Caco-2 (cell line): ENCODE measurements at regions of chr12 and their contacts with region 1.

Region 1: DNA sequence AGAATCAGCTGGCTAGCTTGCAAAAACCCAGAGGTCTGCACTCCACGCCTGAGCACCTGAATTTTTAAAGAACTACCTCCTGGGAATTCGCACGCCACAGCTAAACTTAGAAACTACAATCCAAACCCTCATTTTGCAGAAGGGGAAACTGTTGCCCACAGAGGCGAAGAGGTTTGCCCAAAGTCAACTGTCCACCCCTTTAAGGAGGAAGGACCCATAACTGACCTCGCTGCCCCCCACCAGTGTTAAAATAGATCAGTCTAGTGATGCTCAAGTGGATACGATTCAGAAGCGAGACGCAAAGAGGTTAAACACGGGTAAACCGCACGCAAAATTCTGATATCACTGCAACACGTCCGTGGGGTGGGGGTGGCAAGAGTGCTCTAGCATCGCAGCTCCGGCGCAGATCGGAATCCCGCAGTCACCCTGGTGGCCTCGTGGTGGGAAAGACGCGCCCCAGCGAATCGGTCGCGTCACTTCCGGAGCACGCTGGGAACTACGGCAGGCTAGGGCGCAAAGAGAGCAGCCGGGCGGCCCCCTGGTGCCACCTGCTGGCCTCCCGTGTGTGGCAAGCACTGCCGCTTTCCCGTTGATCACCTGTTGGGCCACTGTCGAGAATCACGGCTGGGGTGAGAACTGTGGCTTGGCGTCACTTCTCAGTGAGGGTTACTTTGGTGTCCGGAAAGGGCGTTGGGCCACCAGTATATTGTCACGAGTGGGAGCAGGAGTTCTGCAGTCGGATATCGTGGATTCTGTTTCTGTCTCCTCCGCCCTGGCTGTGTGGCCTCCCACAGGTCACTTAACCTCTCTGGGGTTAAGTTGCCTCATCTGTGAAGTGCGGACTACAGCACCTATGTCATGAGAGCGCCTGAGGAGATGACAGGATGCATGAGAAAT is at the start of gene ALKBH2:
- DNase-seq: peak; percentile 93 to 94
- H3K4me3 ChIP-seq: peak within 1 kb of the TSS; percentile 49
- H3K4me3 Mint-ChIP-seq: peak within 1 kb of the TSS; percentile 77
- H3K27ac Mint-ChIP-seq: peak within 1 kb of the TSS; percentile 81
- H3K4me1 ChIP-seq: no peaks in the 10 kb centered on the region; the same call in 1 of the 2 replicates
- H3K4me1 Mint-ChIP-seq: peaks cover 8% of the 10 kb centered on the region
- H3K27me3 ChIP-seq: no peaks in the 10 kb centered on the region
- H3K27me3 Mint-ChIP-seq: no peaks in the 10 kb centered on the region
- CTCF ChIP-seq: peak; percentile 94 to 95
- total RNA-seq, gene ALKBH2: 38.3 and 41.4 TPM in 2 replicates

Region 2: DNA sequence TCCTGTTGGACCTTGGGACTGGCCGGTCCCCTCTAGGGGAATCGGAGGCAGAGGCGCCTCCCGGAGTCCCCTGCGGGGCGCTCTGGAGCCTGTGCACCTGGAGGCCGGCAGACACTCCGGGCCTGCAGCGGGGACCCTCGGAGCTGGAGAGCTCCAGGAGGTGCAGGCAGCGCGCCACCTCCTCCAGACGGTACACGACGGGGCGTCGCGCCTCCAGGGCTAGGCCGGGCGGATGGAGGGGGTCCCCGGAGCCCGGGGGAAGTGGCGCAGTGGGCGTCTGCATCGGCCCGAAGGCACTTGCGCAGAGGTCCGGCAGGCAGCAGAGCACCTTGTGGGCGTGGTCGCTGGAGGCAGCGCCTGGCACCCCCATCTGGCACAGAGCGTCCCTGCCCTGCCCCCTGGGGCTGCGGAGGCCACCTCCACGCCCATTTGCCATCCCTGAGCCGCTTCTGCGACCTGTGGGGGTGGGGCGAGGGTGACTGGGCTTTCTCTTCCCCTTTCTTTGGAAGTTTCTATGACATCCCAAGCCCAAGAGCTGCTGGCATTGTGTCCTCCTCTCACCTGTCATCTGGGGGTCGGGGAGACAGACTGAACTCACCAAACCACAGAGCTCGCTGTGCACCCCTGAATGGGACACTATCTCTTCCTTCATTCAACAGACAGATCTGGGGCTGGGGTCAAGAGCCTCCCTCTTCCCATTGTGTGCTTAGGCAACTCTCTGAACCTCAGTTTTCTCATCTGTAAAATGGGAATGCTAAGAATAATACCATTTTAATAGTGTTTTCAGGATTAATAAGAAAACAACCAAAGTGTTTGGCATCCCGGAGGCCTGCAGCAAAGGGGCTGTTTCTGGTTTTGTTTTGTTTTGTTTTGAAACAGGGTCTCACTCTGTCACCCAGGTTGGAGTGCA is 324.4 kb before region 1 on chr12:
- CTCF ChIA-PET with region 1: interaction called, 4 read pairs
- POLR2A ChIA-PET with region 1: no interaction called
- intact Hi-C with region 1: loop called (anchors 2 kb)
- DNase-seq: peak in 1 of 2 experiments; percentile 37
- H3K4me3 ChIP-seq: no peak overlapping the region; the same call in 1 of the 2 replicates
- H3K4me3 Mint-ChIP-seq: peak overlapping the region; percentile 23
- H3K27ac Mint-ChIP-seq: no peak overlapping the region
- H3K4me1 ChIP-seq: peaks cover 18% of the 10 kb centered on the region
- H3K4me1 Mint-ChIP-seq: peaks cover 7% of the 10 kb centered on the region
- H3K27me3 ChIP-seq: no peaks in the 10 kb centered on the region
- H3K27me3 Mint-ChIP-seq: no peaks in the 10 kb centered on the region
- CTCF ChIP-seq: no peak

Region 3: DNA sequence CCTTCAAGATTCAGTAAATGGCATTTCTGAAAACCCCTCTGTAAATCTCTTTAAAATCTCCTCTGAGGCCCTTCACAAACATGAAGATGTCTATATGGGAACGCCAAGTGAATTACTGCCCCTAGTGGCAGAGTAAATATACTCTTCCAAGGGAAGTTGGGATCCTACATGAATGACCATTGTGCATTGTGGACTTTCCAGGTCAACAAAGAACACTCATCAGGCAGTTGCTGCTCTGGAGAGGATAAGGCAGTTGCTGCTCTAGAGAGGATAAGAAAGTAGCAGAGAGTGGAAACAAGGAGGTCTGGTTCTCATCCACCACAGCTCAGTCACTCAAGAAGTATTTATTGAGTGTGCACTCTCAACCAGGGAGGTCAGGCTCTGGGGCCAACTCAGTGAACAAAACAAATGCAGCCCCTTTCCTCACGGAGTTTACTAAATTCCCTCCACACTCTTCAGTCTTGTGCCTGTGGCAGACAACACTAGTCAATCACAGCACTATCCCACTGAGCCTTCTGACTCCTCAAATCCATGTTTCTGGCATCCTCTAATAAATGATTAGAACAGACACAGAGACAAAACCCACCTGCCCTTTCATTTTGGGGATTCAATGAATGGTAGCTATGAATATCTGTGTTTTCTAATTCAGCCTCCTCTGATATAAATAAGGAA is 125.3 kb before region 1 on chr12:
- CTCF ChIA-PET with region 1: no interaction called
- POLR2A ChIA-PET with region 1: no interaction called
- intact Hi-C with region 1: loop called (anchors 5 kb)
- DNase-seq: peak in 1 of 2 experiments; percentile 29
- H3K4me3 ChIP-seq: no peak overlapping the region
- H3K4me3 Mint-ChIP-seq: no peak overlapping the region
- H3K27ac Mint-ChIP-seq: no peak overlapping the region
- H3K4me1 ChIP-seq: no peaks in the 10 kb centered on the region
- H3K4me1 Mint-ChIP-seq: no peaks in the 10 kb centered on the region
- H3K27me3 ChIP-seq: no peaks in the 10 kb centered on the region
- H3K27me3 Mint-ChIP-seq: no peaks in the 10 kb centered on the region
- CTCF ChIP-seq: peak; percentile 42 to 45

Region 4: DNA sequence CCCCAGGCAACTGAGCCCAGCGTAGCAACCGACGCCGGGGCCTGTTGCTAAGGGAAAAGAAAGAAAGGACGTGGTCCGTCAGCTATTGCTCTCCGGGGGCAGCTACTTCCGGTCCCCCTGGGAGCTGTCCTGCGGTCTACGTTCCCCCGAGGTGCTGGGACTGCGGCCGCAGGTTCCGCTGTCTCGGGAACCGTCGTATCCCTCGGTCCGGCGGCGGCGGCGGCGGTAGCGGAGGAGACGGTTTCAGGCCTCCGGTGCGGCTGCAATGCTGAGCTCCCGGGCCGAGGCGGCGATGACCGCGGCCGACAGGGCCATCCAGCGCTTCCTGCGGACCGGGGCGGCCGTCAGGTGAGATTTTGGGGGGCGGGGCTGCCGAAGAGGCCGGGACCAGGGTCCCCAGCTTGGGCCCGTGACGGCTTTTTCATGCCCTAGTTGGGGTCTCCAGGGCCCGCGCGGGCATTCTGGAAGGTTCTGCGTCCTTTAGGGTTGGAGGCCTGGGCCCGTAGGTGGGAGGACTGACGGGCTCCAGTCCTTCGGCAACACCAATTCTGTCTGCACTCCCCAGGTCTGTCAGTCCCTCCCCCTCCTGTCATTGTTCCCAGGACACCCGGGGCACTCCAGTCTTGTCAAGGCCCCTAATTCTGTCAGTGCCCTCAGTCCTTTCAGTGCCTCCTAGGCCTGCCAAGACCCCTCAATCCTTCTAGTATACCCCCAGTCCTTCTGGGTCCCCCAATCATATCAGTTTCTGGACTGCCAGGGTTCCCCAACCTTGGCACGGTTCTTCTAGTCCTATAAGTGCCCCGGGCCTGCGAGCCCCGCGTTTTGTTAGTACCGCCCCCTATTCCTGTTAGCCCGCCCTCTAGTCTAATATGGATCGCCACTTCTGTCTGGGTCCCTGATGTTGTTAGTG is 40.6 kb before region 1 on chr12 and contains the start of gene USP30:
- CTCF ChIA-PET with region 1: interaction called, 3 read pairs
- POLR2A ChIA-PET with region 1: no interaction called
- intact Hi-C with region 1: loop called (anchors 2 kb)
- DNase-seq: peak; percentile 84 to 87
- H3K4me3 ChIP-seq: peak within 1 kb of the TSS; percentile 75
- H3K4me3 Mint-ChIP-seq: peak within 1 kb of the TSS; percentile 96
- H3K27ac Mint-ChIP-seq: peak within 1 kb of the TSS; percentile 88
- H3K4me1 ChIP-seq: 0 out of 2 replicates have a peak, but pooled peaks cover 9% of the 10 kb centered on the region
- H3K4me1 Mint-ChIP-seq: peaks cover 10% of the 10 kb centered on the region
- H3K27me3 ChIP-seq: no peaks in the 10 kb centered on the region
- H3K27me3 Mint-ChIP-seq: no peaks in the 10 kb centered on the region
- CTCF ChIP-seq: no peak
- total RNA-seq, gene USP30: 11.9 and 12.3 TPM in 2 replicates